Adrenal gland (tissue), 19 donors: ENCODE measurements at regions of chr16 and their contacts with region 1.

Region 1: GRCh38 chr16:21708533-21709115 is 44.9 kb downstream of the OTOA start:
- DNase-seq: peak; percentile 69 to 94 (median 85)
- H3K4me3 ChIP-seq: peak overlapping the region in 1 of 4 donors; percentile 13
- H3K27ac ChIP-seq: no peak overlapping the region
- H3K4me1 ChIP-seq: no peaks in the 10 kb centered on the region
- H3K27me3 ChIP-seq: no peaks in the 10 kb centered on the region
- CTCF ChIP-seq: peak; percentile 78 to 86 (median 83)
- POLR2A ChIP-seq: no peak

Region 2: GRCh38 chr16:21584817-21585216 is 123.8 kb before region 1 on chr16:
- intact Hi-C with region 1: loop called (anchors 5 kb)
- DNase-seq: no peak
- H3K4me3 ChIP-seq: no peak overlapping the region
- H3K27ac ChIP-seq: no peak overlapping the region
- H3K4me1 ChIP-seq: peaks cover 6 to 12% of the 10 kb centered on the region in 2 donors
- H3K27me3 ChIP-seq: no peaks in the 10 kb centered on the region
- CTCF ChIP-seq: no peak
- POLR2A ChIP-seq: no peak

Region 3: DNA sequence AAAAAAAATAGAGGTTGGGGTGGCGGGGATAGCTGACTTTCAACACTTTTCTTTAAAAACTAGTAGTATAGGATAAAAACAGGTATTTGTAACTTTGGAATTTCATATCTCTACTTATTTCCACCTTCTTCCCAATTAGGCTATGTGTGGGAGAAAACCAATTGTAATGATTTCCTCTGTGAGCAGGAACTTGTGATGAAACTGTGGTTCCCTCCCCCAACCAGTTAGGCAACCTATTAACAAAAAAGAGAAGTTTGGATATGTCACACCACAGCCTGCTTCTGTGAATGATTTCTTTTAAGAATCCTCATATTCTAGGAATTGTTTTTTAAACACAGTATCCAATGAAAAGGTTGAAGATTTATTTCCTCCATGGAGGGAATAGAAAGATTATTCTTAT is 58.1 kb before region 1 on chr16:
- intact Hi-C with region 1: loop called (anchors 5 kb)
- DNase-seq: peak in 1 of 7 donors; percentile 39
- H3K4me3 ChIP-seq: no peak overlapping the region
- H3K27ac ChIP-seq: peak overlapping the region in 2 of 5 donors; percentile 26 to 54
- H3K4me1 ChIP-seq: peaks cover 14 to 43% of the 10 kb centered on the region in 2 donors
- H3K27me3 ChIP-seq: no peaks in the 10 kb centered on the region
- CTCF ChIP-seq: no peak
- POLR2A ChIP-seq: no peak

Region 4: GRCh38 chr16:21656795-21657768 is 51.5 kb before region 1 on chr16:
- intact Hi-C with region 1: loop called (anchors 5 kb)
- DNase-seq: peak in 4 of 7 donors; percentile 41 to 53 (median 47)
- H3K4me3 ChIP-seq: no peak overlapping the region
- H3K27ac ChIP-seq: no peak overlapping the region
- H3K4me1 ChIP-seq: peaks cover 4 to 40% of the 10 kb centered on the region in 2 donors
- H3K27me3 ChIP-seq: no peaks in the 10 kb centered on the region
- CTCF ChIP-seq: peak; percentile 72 to 90 (median 78)
- POLR2A ChIP-seq: no peak